Left cardiac atrium (tissue), 4 donors: ENCODE measurements at regions of chr19 and their contacts with region 1.

Region 1: DNA sequence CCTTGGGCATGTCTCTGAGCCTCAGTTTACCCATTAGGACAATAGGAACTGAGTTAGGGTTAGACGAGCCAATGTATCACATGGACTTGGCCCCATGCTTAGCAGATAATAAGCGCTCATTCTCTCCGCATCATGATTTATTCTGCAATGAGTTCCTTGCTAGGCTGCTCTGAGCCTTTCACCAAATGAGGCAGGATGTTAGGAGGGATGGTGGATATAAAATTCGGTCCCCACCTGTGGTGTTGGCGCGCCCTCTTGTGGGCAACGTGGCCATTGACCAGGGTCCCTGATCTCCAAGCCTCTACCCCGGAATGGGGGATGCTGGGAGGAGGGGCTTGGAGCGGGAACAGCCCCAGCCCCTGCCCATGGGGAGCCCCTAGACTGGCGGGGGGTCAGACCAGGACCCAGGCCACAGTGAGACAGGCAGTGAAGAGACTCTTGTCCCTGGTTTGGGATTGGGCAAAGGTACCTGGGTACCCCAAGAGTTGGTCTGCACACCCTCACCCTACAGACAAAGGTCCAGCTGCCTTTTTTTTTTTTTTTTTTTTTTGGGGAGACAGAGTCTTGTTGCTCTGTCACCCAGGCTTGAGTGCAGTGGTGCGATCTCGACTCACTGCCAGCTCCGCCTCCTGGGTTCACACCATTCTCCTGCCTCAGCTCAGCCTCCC is 43.9 kb downstream of the CERS4 start:
- DNase-seq: peak; percentile 83
- ATAC-seq: peak; percentile 67 to 70

Region 2: GRCh38 chr19:7943444-7944176 is 309.4 kb before region 1 on chr19 and contains the start of gene TIMM44:
- intact Hi-C with region 1: loop called (anchors 2 to 10 kb)
- DNase-seq: peak; percentile 99
- ATAC-seq: peak; percentile 99 to 100
- total RNA-seq, gene TIMM44: 70.6 to 73.8 TPM

Region 3: DNA sequence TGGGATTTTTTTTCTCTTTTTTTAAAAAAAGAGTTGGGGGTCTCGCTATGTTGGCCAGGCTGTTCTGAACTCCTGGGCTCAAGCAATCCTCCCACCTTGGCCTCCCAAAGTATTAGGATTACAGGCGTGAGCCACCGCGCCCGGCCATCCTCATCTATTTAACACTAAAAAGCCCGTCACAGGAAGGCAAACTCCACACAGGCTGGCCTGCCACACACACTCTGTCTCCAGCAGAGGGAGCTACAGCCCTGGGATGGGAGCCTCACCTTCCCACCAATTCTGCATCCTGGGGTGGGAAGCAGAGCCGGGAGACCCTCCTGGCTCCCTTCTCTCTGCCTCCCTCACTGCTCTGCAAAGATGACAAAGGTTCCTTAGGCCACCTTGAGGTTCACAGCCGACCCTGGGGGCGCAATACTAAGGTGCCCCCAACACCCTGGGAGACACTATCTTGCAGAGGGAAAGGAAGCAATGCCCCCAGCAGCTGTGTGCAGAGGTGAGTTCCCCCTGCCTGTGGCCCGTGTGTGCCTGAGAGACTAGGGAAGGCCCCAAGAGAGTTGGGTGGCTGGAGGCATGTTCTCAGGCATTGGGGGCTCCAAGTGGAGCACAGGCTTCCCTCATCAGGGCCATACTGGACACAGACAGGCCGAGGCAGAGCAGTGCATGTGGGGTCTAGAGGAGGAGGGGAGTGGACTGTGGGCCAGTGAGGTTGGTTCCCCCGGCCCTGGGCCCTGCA is 282.2 kb before region 1 on chr19:
- intact Hi-C with region 1: loop called (anchors 2 to 10 kb)
- DNase-seq: no peak
- ATAC-seq: no peak

Region 4: GRCh38 chr19:8005534-8006256 is 247.4 kb before region 1 on chr19 and contains the start of gene ELAVL1:
- intact Hi-C with region 1: loop called in 1 of 2 experiments (anchors 10 kb)
- DNase-seq: peak; percentile 93
- ATAC-seq: peak; percentile 94 to 97
- total RNA-seq, gene ELAVL1: 51.6 to 68.3 TPM

Region 5: GRCh38 chr19:8064911-8065874 is 187.9 kb before region 1 on chr19:
- intact Hi-C with region 1: no loop called
- DNase-seq: no peak
- ATAC-seq: no peak

Region 6: DNA sequence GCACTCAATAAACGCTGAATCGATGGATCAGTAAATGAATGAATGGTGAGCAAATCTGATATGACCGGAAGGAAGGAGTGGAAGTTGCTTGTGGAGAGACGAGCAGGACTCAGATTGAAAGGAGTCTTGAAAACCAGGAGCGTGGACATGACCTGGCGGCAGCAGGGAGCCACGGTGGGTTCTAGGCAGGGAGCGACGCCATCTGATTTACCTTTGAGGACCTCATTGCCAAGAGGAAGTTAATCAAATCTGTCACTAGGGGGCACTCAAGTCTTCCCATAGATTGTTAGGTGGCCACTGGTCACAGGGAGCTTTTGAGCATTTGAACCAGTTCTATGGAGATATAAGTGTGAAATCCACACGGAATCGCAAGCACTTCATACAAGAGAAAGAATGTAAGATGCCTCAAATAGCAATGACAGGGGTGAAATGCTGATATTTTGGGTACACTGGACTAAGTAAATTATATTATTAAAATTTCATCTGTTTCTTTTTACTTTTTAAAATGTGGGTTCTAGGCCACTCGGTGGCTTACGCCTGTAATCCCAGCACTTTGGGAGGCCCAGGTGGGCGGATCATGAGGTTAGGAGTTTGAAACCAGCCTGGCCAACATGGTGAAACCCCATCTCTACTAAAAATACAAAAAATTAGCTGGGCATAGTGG is 94.5 kb before region 1 on chr19:
- intact Hi-C with region 1: loop called (anchors 1 to 5 kb)
- DNase-seq: no peak
- ATAC-seq: peak; percentile 52 to 78

Region 7: GRCh38 chr19:8224394-8225145 is 28.5 kb before region 1 on chr19:
- intact Hi-C with region 1: no loop called
- DNase-seq: peak; percentile 57
- ATAC-seq: peak; percentile 74 to 79